GM12878 (cell line): ENCODE measurements at regions of chr12 and their contacts with region 1.

Region 1: DNA sequence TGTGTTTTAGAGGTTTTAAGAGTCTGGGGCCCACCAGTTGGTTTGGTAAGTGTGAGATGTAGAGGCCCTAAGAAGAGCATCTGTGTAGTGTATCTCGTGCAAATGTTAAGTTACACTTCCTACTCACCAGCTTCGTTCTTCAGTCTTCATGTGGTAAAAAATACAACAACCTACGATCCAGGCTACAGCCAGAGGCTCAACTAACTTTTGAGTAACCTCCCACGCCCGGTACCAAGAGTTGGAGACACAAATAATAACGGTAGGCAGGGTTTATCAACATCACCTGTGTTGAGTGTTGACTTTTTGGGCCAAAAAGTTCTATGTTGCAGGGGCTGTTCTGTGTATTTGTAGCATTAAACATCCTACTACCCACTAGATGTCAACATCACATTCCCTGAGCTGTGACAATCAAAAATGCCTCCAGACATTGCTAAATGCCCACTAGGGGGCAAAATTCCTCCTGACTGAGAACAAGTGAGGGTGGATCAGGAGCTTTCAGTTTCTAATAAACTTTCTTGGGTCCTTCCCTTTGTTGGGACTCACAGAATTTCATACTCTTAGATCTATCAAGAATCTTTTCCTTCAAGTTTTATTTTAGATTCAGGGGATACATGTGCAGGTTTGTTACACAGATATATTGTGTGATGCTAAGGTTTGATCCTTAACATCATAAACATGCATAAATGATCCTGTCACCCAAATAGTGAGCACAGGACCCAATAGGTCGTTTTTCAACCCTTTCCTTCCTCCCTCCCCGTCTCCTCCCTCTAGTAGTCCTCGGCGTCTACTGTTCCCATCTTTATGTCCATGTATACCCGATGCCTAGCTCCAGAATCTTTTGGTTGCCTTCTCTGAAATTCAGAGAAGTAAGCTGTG is 94.7 kb downstream of the SLC2A13 start:
- DNase-seq: peak; percentile 35
- ATAC-seq: peak; percentile 97
- H3K4me3 ChIP-seq: no peak overlapping the region
- H3K27ac ChIP-seq: no peak overlapping the region
- H3K4me1 ChIP-seq: no peaks in the 10 kb centered on the region
- H3K27me3 ChIP-seq: no peaks in the 10 kb centered on the region
- CTCF ChIP-seq: peak; percentile 67 to 85 (median 79)
- EP300 ChIP-seq: no peak
- POLR2A ChIP-seq: no peak
- RAD21 ChIP-seq: peak; percentile 71

Region 2: DNA sequence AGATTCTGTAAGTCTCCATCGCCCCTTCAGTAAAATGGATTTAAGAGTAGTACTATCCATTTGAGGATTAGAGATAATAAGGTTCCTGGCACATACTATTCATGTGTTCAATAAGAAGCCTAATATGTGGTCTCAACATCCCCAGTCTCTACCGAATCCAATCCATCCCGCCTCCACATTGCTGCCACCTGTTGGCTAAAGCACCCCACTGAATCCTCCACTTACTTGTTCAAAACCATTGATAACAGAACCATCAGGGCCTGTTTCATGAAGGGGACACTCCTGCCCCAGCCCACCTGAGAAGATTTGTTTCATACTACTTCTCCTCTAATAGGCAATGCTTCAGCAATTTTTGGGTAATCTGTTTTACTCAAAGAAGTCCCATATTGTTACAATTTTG is 52.8 kb before region 1 on chr12:
- CTCF ChIA-PET with region 1: interaction called, 4 read pairs
- POLR2A ChIA-PET with region 1: no interaction called
- RAD21 ChIA-PET with region 1: no interaction called
- SMC1A ChIA-PET with region 1: no interaction called
- in situ Hi-C with region 1: loop called (anchors 5 kb)
- intact Hi-C with region 1: no loop called
- DNase-seq: no peak
- ATAC-seq: peak; percentile 56
- H3K4me3 ChIP-seq: no peak overlapping the region
- H3K27ac ChIP-seq: no peak overlapping the region
- H3K4me1 ChIP-seq: no peaks in the 10 kb centered on the region
- H3K27me3 ChIP-seq: no peaks in the 10 kb centered on the region
- CTCF ChIP-seq: peak; percentile 16 to 37 (median 35); a peak in 4 of 6 replicates
- EP300 ChIP-seq: no peak
- POLR2A ChIP-seq: no peak
- RAD21 ChIP-seq: peak; percentile 30; the same call in 1 of the 2 replicates

Region 3: GRCh38 chr12:40022850-40023249 is 11.7 kb after region 1 on chr12:
- CTCF ChIA-PET with region 1: interaction called, 23 read pairs
- POLR2A ChIA-PET with region 1: interaction called, 4 read pairs
- RAD21 ChIA-PET with region 1: no interaction called
- SMC1A ChIA-PET with region 1: interaction called, 16 read pairs
- in situ Hi-C with region 1: no loop called
- intact Hi-C with region 1: no loop called
- DNase-seq: no peak
- ATAC-seq: no peak
- H3K4me3 ChIP-seq: no peak overlapping the region
- H3K27ac ChIP-seq: no peak overlapping the region
- H3K4me1 ChIP-seq: no peaks in the 10 kb centered on the region
- H3K27me3 ChIP-seq: no peaks in the 10 kb centered on the region
- CTCF ChIP-seq: no peak
- EP300 ChIP-seq: no peak
- POLR2A ChIP-seq: no peak
- RAD21 ChIP-seq: no peak

Region 4: DNA sequence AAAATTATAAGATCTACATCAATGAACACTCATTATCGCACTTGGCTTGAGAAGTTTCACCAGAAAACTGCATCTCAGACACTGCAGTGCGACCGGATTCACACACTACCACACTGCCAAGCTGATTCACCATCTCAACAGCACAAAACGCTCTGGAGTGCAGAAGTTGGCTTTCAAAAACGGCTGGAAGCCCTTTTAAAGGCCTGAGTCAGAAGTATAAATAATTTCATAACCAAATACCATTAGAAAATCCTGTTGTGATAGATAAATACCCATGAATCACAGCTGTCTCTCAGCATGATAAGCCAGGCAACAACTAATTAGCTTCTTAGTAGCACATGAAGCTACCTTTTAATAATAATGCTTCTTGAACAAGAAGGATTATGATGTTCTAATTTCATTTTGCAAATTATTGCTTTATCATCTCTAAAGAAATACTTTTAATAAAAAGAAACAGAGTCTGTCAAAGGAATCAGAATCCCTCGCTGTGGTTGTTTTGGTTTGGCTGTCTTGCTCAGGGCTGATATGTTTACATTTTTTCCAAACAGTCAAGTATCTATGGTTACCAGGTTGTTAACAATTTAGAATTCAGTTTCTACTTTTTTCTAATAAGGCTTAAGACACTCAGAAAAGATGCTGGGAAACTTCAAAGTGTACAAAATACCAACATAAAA is 43.6 kb after region 1 on chr12:
- CTCF ChIA-PET with region 1: interaction called, 12 read pairs
- POLR2A ChIA-PET with region 1: interaction called, 3 read pairs
- RAD21 ChIA-PET with region 1: interaction called, 7 read pairs
- SMC1A ChIA-PET with region 1: interaction called, 6 read pairs
- in situ Hi-C with region 1: no loop called
- intact Hi-C with region 1: no loop called
- DNase-seq: no peak
- ATAC-seq: no peak
- H3K4me3 ChIP-seq: no peak overlapping the region
- H3K27ac ChIP-seq: no peak overlapping the region
- H3K4me1 ChIP-seq: no peaks in the 10 kb centered on the region
- H3K27me3 ChIP-seq: no peaks in the 10 kb centered on the region; a peak in 1 of 4 replicates
- CTCF ChIP-seq: no peak
- EP300 ChIP-seq: no peak
- POLR2A ChIP-seq: no peak
- RAD21 ChIP-seq: no peak

Region 5: GRCh38 chr12:40117818-40118217 is 106.7 kb after region 1 on chr12:
- CTCF ChIA-PET with region 1: interaction called, 17 read pairs
- POLR2A ChIA-PET with region 1: no interaction called
- RAD21 ChIA-PET with region 1: interaction called, 8 read pairs
- SMC1A ChIA-PET with region 1: interaction called, 17 read pairs
- in situ Hi-C with region 1: no loop called
- intact Hi-C with region 1: no loop called
- DNase-seq: peak; percentile 51
- ATAC-seq: peak; percentile 94
- H3K4me3 ChIP-seq: no peak overlapping the region
- H3K27ac ChIP-seq: no peak overlapping the region
- H3K4me1 ChIP-seq: peaks cover 3% of the 10 kb centered on the region; the same call in 1 of the 2 replicates
- H3K27me3 ChIP-seq: no peaks in the 10 kb centered on the region; a peak in 1 of 4 replicates
- CTCF ChIP-seq: no peak
- EP300 ChIP-seq: peak; percentile 44 to 59; a peak in 2 of 4 replicates
- POLR2A ChIP-seq: no peak
- RAD21 ChIP-seq: no peak

Region 6: GRCh38 chr12:40192704-40193255 is 181.6 kb after region 1 on chr12:
- CTCF ChIA-PET with region 1: no interaction called
- POLR2A ChIA-PET with region 1: no interaction called
- RAD21 ChIA-PET with region 1: no interaction called
- SMC1A ChIA-PET with region 1: no interaction called
- in situ Hi-C with region 1: no loop called
- intact Hi-C with region 1: no loop called
- DNase-seq: peak; percentile 86
- ATAC-seq: peak; percentile 99
- H3K4me3 ChIP-seq: peak overlapping the region; percentile 11; the same call in 1 of the 2 replicates
- H3K27ac ChIP-seq: peak overlapping the region; percentile 79
- H3K4me1 ChIP-seq: peaks cover 7% of the 10 kb centered on the region; the same call in 1 of the 2 replicates
- H3K27me3 ChIP-seq: no peaks in the 10 kb centered on the region
- CTCF ChIP-seq: no peak
- EP300 ChIP-seq: peak; percentile 13 to 61; a peak in 2 of 4 replicates
- POLR2A ChIP-seq: no peak
- RAD21 ChIP-seq: no peak